ENCODE measurements at regions of chr7 and their contacts with region 1.

Region 1: DNA sequence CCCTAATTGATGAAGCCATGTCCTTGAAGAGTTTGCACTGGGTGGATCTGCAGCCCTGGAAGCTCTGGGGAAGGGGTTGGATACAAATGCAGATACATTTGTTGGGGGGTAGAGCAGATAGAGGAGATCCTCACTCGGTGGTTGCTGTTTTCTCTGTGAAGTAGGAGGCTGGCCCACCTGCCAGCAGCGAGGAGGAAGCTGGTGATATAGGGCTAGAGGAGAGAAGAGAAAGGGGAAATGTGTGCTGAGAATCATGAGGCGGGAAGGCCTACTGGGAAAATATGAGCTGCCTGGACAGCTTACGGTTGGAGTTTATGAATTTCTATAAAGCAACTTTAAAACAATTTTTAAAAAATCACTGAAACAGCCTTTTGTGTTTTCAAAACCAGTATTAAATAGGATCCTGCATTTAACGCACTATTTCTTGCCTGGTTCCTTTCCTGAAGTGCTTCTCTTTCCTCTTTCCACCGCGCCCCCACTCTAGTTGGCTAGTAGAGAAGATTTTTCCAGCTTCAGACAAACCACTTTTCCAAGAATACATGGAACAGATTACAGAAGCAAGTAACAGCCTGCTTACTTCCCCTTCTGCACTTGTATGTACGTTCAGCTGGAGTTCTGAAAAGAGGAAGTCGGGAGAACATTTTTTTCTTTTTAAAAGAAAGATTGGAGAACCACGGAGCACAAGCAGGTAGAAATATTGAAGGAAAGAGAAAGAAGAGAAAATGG is 100.6 kb upstream of the GLCCI1 start:
- DNase-seq: peak; percentile 47
- H3K4me3 ChIP-seq: peak overlapping the region; percentile 38
- H3K27ac ChIP-seq: no peak overlapping the region
- H3K4me1 ChIP-seq: peaks cover 20% of the 10 kb centered on the region
- CTCF ChIP-seq: no peak

Region 2: DNA sequence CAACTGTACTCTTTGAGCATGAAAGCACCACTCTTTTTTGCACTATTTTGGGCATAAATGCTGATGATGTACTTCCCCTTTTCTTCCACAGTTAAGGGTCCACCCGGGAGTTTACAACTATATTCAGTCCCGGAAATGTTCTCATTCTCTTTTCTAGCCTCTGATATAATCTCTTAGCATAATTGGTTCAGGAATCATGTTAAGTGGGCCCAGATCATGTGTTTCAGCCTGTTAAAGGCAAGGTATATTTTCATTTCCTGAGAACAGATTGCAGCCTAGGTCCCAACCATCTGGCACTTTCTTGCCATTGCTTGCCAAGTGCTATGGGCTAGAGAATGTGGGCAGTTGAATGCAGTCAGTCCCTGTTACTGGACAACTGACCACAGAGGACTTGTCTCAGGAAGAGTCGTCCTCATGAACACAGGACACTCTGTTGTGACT is 10.8 kb before region 1 on chr7:
- CTCF ChIA-PET with region 1: no interaction called
- POLR2A ChIA-PET with region 1: interaction called, 13 read pairs
- intact Hi-C with region 1: no loop called
- DNase-seq: peak; percentile 79
- H3K4me3 ChIP-seq: peak overlapping the region; percentile 30
- H3K27ac ChIP-seq: peak overlapping the region; percentile 71
- H3K4me1 ChIP-seq: peaks cover 29% of the 10 kb centered on the region
- CTCF ChIP-seq: no peak

Region 3: GRCh38 chr7:7884855-7885254 is 16.8 kb after region 1 on chr7:
- CTCF ChIA-PET with region 1: no interaction called
- POLR2A ChIA-PET with region 1: interaction called, 12 read pairs
- intact Hi-C with region 1: no loop called
- DNase-seq: no peak
- H3K4me3 ChIP-seq: no peak overlapping the region
- H3K27ac ChIP-seq: no peak overlapping the region
- H3K4me1 ChIP-seq: peaks cover 6% of the 10 kb centered on the region
- CTCF ChIP-seq: no peak

Region 4: DNA sequence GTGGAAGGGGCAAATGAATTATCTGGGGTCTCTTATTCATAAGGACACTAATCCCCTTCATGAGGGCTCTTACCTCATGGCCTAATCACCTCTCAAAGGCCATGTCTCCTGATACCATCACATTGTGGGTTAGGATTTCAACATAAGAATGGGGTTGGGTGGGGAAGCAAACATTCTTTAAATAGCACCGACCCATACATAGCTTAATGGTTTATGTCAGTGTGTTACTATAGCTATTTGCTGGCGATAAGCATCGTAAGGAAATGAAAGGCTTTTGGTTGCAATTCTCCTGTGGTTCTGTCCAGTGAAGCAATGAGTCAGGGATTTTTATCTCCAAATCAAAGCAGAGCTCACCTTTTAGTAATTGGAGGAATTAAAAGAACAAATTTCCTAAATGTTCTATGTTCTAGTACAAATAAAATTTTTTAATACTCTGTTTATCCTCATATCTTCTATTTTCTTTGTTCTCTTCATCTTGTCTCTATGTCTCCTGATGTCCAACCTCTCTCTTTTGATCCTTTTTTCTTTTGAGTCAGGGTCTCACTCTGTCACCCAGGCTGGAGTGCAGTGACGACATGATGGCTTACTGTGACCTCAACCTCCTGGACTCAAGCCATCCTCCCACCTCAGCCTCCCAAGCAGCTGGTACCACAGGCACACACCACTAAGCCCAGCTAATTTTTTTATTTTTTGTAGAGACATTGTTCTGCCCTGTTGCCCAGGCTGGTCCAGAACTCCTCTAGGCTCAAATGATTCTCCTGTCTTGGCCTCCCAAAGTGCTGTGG is 43.6 kb after region 1 on chr7:
- CTCF ChIA-PET with region 1: no interaction called
- POLR2A ChIA-PET with region 1: no interaction called
- intact Hi-C with region 1: no loop called
- DNase-seq: no peak
- H3K4me3 ChIP-seq: no peak overlapping the region
- H3K27ac ChIP-seq: no peak overlapping the region
- H3K4me1 ChIP-seq: peaks cover 16% of the 10 kb centered on the region
- CTCF ChIP-seq: no peak